Common myeloid progenitor, CD34-positive (primary cell): ENCODE measurements at regions of chr5 and their contacts with region 1.

Region 1: DNA sequence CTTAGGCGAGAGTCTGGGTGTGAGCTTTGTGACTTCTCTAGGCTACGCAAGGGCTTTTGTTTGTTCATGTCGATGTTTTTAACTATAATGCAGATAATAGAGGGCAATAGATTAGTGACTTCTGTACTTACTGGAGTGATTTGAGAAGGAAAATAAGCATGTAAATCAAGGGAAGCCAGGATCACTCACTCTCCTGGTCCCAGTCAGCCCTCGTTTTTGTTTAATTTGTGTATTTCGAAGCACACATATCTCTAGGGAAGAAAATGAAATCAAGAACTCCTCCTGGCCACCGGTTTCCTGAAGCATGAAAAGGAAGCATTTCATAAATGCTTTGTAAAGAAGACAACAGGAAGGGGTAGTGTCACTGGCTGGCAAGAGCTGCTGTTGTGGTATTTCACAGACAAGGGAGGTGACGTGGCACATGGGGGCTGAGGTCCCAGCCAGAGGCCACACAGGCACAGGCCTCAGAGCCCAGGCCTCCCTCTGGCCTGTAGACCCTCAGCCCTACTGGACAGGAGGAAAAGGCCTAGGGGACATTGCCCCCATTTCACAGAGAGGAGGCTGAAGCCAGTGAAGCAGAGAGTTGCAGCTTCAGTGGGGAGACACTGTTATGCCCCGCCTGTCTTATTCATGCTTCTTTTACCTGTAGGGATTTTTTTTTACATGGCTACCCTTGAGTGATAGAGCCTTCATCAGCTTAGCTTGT is 34.1 kb downstream of the IRF1 start:
- DNase-seq: peak; percentile 78 to 97 (median 95)
- H3K4me3 ChIP-seq: peak overlapping the region in 6 of 7 experiments; percentile 4 to 49 (median 18)
- H3K27ac ChIP-seq: peak overlapping the region; percentile 89 to 91
- H3K4me1 ChIP-seq: peaks cover 48 to 85% (median 82%) of the 10 kb centered on the region in 4 experiments
- H3K27me3 ChIP-seq: no peaks in the 10 kb centered on the region

Region 2: GRCh38 chr5:132419502-132420468 is 36.7 kb before region 1 on chr5:
- CTCF ChIA-PET with region 1: interaction called, 159 read pairs
- POLR2A ChIA-PET with region 1: interaction called, 48 read pairs
- DNase-seq: peak; percentile 74 to 83 (median 81)
- H3K4me3 ChIP-seq: peak overlapping the region in 4 of 7 experiments; percentile 27 to 58 (median 39)
- H3K27ac ChIP-seq: peak overlapping the region; percentile 71 to 80
- H3K4me1 ChIP-seq: peaks cover 41 to 97% (median 83%) of the 10 kb centered on the region in 4 experiments
- H3K27me3 ChIP-seq: no peaks in the 10 kb centered on the region

Region 3: DNA sequence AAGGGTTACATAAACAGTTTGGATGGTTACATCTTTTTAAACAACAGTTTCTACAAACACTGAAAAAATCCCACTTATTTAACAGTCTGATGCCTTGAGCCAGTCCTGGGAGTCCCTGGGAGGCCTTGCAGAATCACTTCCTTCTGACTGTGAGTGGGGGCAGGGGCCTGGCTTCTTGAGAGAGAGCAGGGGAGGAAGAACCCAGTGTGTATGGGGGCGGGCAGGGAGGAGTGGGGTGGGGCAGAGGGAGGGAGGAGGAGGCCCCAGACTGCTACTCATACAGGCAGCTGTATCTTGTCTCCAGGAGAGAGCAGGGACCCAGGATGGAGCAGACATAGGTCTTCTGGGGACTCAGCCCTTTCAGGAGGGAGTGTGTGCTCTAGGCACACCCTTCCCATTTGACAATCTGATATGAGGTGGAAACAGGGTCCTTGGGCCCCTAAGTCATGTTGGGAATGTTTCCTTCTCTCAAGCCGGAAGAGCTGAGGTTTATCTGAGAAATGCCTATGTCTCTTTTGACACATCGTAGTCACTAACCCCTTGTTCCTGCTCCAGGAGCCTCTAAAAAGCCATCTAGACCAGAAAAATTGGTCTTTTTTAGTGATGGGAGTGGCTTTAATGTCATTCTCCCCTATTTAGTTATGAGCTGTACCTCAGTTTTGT is 18.7 kb before region 1 on chr5:
- CTCF ChIA-PET with region 1: interaction called, 159 read pairs
- POLR2A ChIA-PET with region 1: interaction called, 4 read pairs
- DNase-seq: peak in 2 of 3 donors; percentile 62 to 72
- H3K4me3 ChIP-seq: peak overlapping the region in 1 of 7 experiments; percentile 10
- H3K27ac ChIP-seq: peak overlapping the region; percentile 37 to 75
- H3K4me1 ChIP-seq: peaks cover 16 to 74% (median 62%) of the 10 kb centered on the region in 4 experiments
- H3K27me3 ChIP-seq: no peaks in the 10 kb centered on the region

Region 4: DNA sequence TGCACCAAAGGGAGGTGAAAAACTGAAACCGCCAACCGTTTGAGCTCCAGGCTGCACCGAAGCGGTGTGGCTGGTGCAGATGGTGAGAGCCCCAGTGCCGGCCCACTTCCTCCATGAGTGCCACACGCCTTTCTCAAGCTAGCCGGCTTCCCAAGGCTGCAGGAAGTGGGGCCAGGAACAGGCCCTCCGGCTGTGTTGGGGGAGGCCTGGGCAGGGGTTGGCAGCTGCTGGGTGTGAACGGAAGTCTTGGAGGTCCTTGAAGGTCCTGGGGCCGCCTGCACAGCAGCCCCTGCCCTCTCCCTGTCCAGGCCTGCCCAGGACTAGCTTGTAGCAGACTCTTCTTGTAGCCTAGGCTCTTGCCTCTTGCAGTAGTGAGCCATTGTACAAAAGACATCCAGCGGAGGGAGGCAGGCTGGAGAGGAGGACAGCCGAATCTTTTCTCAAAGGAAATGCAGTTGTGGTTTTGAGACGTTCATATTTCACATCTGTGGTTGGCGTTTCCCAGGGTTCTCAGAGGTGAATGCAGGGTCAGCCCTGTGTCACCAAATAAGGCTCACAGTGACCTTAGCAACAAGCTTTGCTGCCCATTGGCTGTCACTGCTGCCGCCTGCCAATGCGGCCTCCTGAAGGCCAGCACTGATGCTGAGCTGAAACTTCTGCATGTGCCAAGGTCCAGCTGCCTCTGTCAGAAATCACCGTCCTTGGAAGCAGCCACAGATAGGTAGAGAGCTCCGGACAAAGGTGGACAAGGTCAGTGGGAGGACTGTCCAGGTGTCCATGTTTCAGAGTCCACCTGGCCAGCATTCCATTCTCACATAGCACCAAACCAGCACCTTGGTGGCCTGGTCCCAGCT is 10.2 kb after region 1 on chr5:
- CTCF ChIA-PET with region 1: interaction called, 278 read pairs
- POLR2A ChIA-PET with region 1: interaction called, 63 read pairs
- DNase-seq: peak; percentile 88 to 99 (median 98)
- H3K4me3 ChIP-seq: peak overlapping the region in 4 of 7 experiments; percentile 29 to 66 (median 40)
- H3K27ac ChIP-seq: peak overlapping the region; percentile 67 to 69
- H3K4me1 ChIP-seq: peaks cover 45 to 93% (median 87%) of the 10 kb centered on the region in 4 experiments
- H3K27me3 ChIP-seq: no peaks in the 10 kb centered on the region

Region 5: GRCh38 chr5:132473019-132473531 is 16.6 kb after region 1 on chr5:
- CTCF ChIA-PET with region 1: interaction called, 278 read pairs
- POLR2A ChIA-PET with region 1: interaction called, 53 read pairs
- DNase-seq: peak; percentile 78 to 96 (median 91)
- H3K4me3 ChIP-seq: peak overlapping the region in 1 of 7 experiments; percentile 39
- H3K27ac ChIP-seq: no peak overlapping the region
- H3K4me1 ChIP-seq: peaks cover 10 to 80% (median 64%) of the 10 kb centered on the region in 4 experiments
- H3K27me3 ChIP-seq: no peaks in the 10 kb centered on the region

Region 6: DNA sequence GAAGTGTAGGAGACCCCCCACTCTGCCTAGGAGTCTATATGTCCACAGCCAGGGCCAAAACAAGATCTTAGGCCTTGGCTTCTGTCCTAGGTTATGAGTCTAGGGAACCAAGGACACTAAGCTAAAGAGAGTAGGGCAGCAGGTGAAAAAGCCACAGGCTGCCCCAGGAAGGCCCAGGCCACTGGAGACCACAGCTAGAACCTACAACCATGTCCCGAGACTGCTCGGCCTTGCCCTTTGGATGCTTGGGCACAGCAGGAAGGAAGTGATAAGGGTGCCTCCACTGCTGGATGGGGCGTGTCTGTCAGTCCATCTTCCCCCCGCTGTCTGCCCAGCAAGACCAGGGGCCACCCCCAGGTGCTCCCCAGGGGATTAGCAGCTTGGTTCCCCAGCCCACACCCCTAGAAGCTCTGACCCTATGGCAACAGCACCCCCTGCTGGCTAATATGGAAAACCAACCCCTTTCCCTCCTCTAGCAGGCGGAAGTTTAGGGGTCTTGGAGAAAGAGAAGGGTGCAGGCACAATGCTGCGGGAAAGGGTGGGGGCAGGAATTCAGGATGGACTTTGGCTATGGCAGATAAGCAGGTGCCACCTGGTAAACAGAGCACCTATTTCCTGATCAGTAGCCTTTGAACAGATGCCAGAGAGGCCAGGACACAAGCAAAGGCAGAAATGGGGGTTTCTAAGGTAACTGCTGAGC is 44.6 kb after region 1 on chr5:
- CTCF ChIA-PET with region 1: interaction called, 471 read pairs
- POLR2A ChIA-PET with region 1: interaction called, 6 read pairs
- DNase-seq: peak; percentile 82 to 91 (median 91)
- H3K4me3 ChIP-seq: no peak overlapping the region
- H3K27ac ChIP-seq: peak overlapping the region in 1 of 2 experiments; percentile 35
- H3K4me1 ChIP-seq: peaks cover 0 to 40% (median 29%) of the 10 kb centered on the region in 4 experiments
- H3K27me3 ChIP-seq: no peaks in the 10 kb centered on the region